Activated naive CD4-positive, alpha-beta T cell treated with anti-CD3 and anti-CD28 coated beads for 36 hours (primary cell): ENCODE measurements at regions of chr5 and their contacts with region 1.

Region 1: GRCh38 chr5:134132372-134133034 is 18.0 kb downstream of the TCF7 start:
- DNase-seq: peak; percentile 93
- H3K4me3 Mint-ChIP-seq: peak overlapping the region; percentile 36
- H3K27ac Mint-ChIP-seq: peak overlapping the region; percentile 90
- H3K4me1 Mint-ChIP-seq: peaks cover 99% of the 10 kb centered on the region
- H3K27me3 Mint-ChIP-seq: no peaks in the 10 kb centered on the region

Region 2: DNA sequence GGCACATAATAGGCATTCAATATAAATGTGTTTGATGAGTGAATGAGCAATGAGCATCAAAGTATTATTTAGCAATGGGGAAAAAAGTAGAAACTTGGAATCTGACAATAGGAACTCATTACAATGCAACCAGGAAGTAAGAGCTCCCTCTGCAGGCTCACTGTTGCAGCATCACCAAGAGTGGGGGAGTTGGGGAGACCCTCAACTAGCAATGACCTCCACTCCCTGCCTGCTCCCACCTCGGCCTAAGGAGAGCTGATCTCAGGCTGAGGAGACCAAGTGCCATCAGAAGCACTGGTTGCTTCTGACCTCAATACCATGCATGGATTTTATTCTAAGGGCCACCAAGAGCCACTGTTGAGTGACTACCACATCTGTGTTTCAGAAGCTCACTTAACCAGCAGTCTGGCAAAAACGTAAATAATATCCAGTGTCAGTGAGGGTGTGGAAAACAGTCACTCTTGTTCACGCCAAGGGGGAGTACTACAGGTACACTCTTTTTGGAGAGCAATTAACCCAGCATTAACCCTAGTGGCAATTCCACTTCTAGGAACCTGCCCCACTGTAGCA is 135.7 kb before region 1 on chr5:
- CTCF ChIA-PET with region 1: no interaction called
- intact Hi-C with region 1: no loop called
- DNase-seq: no peak
- H3K4me3 Mint-ChIP-seq: no peak overlapping the region
- H3K27ac Mint-ChIP-seq: no peak overlapping the region
- H3K4me1 Mint-ChIP-seq: peaks cover 66% of the 10 kb centered on the region
- H3K27me3 Mint-ChIP-seq: no peaks in the 10 kb centered on the region

Region 3: GRCh38 chr5:134086943-134087305 is 45.6 kb before region 1 on chr5:
- CTCF ChIA-PET with region 1: interaction called, 3 read pairs
- intact Hi-C with region 1: loop called (anchors 1 kb)
- DNase-seq: peak; percentile 85
- H3K4me3 Mint-ChIP-seq: peak overlapping the region; percentile 59
- H3K27ac Mint-ChIP-seq: peak overlapping the region; percentile 86
- H3K4me1 Mint-ChIP-seq: peaks cover 82% of the 10 kb centered on the region
- H3K27me3 Mint-ChIP-seq: no peaks in the 10 kb centered on the region

Region 4: DNA sequence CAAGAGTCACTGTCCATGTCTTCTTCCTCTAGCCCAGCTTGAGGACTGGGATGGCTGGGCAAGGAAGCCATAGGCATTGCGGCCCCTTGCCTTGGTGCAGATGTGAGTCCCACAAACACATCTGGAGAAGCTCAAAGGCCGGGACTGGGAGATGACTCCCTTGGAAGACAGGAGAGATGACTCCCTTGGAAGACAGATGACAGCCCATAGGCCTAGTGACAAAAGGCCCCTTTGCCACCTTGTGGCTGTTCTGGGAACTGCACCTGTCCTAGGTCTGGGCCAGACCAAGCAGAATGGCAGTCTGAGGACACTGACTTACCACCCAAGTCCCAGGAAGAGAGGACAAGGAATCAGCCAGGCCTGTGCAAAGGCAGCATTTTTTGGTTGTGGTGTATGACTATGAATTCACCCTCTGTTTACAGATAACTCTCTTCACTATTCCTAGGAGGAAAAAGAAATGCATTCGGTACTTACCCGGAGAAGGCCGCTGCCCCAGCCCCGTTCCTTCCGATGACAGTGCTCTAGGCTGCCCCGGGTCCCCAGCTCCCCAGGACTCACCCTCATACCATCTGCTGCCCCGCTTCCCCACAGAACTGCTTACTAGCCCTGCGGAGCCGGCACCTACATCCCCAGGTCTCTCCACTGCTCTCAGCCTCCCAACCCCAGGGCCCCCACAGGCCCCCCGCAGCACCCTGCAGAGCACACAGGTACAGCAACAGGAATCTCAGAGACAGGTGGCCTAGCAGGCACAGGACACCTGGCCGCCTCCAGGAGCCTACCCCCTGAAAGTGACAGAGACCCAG is 13.5 kb after region 1 on chr5:
- CTCF ChIA-PET with region 1: interaction called, 437 read pairs
- intact Hi-C with region 1: no loop called
- DNase-seq: peak; percentile 93
- H3K4me3 Mint-ChIP-seq: no peak overlapping the region
- H3K27ac Mint-ChIP-seq: peak overlapping the region; percentile 79
- H3K4me1 Mint-ChIP-seq: peaks cover 42% of the 10 kb centered on the region
- H3K27me3 Mint-ChIP-seq: no peaks in the 10 kb centered on the region

Region 5: GRCh38 chr5:134406390-134406789 is 273.9 kb after region 1 on chr5:
- CTCF ChIA-PET with region 1: no interaction called
- intact Hi-C with region 1: no loop called
- DNase-seq: no peak
- H3K4me3 Mint-ChIP-seq: no peak overlapping the region
- H3K27ac Mint-ChIP-seq: no peak overlapping the region
- H3K4me1 Mint-ChIP-seq: peaks cover 40% of the 10 kb centered on the region
- H3K27me3 Mint-ChIP-seq: no peaks in the 10 kb centered on the region